Activated T-helper 1 cell treated with anti-CD3 and anti-CD28 coated beads, Interleukin-12 subunit alpha, Interleukin-12 subunit beta, Interleukin-2, Interleukin-4 antibody, amounts not matched to agents 30 ng/mL and 10 ng/mL and 1 ng/mL, durations not matched to agents 14 hours and 24 hours and 36 hours (primary cell): ENCODE measurements at regions of chr14 and their contacts with region 1.

Region 1: DNA sequence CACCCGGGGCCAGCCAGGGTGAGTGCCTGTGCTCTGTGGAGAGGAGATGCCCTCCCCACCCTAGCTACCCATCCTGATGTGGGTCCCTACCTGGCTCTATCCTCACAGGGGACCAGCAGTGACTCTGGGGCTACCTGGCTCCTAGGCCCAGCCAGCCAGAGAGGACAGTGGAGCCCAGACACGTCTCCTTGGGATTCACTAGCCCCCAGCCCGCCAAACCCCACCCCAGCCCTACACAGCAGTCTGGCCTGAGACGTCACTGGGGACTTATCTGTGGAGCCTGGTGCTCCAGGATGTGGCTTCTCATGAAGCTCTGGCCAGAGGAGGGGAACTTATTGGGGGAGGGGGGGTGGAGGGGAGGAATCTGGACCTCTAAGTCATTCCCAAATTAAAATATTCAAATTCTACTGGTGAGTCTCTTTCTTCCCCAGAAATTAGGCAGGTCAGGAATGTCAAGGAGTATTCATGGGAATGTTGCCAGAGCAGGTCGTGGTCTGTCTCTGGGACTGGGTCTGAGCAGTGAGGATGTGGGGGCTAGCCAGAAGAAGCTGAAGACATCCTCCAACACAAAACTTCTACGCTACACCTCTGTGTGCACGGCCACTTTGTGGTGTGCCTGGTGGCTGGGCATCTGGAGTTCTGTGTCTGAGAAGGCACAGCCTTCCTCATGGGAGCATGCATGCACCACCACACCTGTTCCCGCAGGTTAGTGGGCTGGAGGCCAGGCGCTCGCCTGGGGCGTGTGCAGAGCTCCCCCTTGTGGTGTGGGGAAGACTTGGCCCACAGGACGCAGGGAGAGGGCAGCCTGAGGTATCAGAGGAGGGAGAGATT is 2.7 kb downstream of the CMTM5 start:
- DNase-seq: peak; percentile 48
- H3K4me3 Mint-ChIP-seq: no peak overlapping the region
- H3K27ac Mint-ChIP-seq: no peak overlapping the region
- H3K4me1 Mint-ChIP-seq: no peaks in the 10 kb centered on the region
- H3K27me3 Mint-ChIP-seq: peaks cover 2% of the 10 kb centered on the region

Region 2: GRCh38 chr14:23120541-23121251 is 258.9 kb before region 1 on chr14:
- intact Hi-C with region 1: loop called (anchors 1 kb)
- DNase-seq: peak; percentile 73
- H3K4me3 Mint-ChIP-seq: peak overlapping the region; percentile 38
- H3K27ac Mint-ChIP-seq: peak overlapping the region; percentile 90
- H3K4me1 Mint-ChIP-seq: peaks cover 31% of the 10 kb centered on the region
- H3K27me3 Mint-ChIP-seq: peaks cover 10% of the 10 kb centered on the region

Region 3: DNA sequence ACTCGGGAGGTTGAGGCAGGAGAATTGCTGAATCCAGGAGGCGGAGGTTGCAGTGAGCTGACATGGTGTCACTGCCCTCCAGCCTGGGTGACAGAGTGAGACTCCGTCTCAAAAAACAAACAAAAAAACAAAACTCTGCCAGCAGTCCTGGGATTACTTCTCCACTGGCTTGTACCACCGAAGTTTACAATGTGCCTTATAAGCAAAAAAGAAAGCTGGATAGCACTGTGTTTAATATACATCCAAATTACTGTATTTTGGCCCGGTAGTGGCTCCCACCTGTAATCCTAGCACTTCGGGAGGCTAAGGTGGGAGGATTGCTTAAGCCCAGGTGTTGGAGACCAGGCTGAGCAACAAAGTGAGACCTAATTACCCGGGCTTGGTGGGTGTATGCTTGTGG is 110.4 kb before region 1 on chr14:
- intact Hi-C with region 1: loop called (anchors 1 kb)
- DNase-seq: no peak
- H3K4me3 Mint-ChIP-seq: no peak overlapping the region
- H3K27ac Mint-ChIP-seq: no peak overlapping the region
- H3K4me1 Mint-ChIP-seq: no peaks in the 10 kb centered on the region
- H3K27me3 Mint-ChIP-seq: peaks cover 25% of the 10 kb centered on the region